ENCODE measurements at regions of chr12 and their contacts with region 1.

Region 1: DNA sequence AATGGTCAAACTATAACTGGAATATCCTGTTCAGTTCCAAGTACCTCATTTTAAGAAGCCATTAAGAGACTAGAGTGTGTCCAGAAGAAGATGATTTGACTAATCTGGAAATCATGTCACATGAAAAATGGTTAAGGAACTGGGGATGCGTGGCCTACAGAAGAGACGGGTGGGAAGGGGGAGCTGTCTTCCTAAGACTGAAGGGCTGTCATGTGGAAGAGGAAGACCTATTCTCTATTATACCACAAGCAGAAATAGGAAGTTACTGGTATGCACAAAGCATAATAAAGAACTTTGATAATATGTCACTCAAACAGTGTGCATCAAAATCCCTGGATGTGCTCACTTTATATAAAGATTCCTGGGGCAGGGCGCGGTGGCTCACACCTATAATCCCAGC is 50.3 kb downstream of the HECTD4 start:
- DNase-seq: no peak
- H3K4me3 ChIP-seq: no peak overlapping the region
- H3K27ac ChIP-seq: no peak overlapping the region
- H3K4me1 ChIP-seq: peaks cover 14% of the 10 kb centered on the region
- H3K27me3 ChIP-seq: no peaks in the 10 kb centered on the region
- CTCF ChIP-seq: no peak

Region 2: GRCh38 chr12:112375105-112375504 is 43.2 kb after region 1 on chr12:
- CTCF ChIA-PET with region 1: no interaction called
- POLR2A ChIA-PET with region 1: no interaction called
- intact Hi-C with region 1: loop called (anchors 5 kb)
- DNase-seq: no peak
- H3K4me3 ChIP-seq: no peak overlapping the region
- H3K27ac ChIP-seq: no peak overlapping the region
- H3K4me1 ChIP-seq: no peaks in the 10 kb centered on the region
- H3K27me3 ChIP-seq: no peaks in the 10 kb centered on the region
- CTCF ChIP-seq: no peak

Region 3: GRCh38 chr12:112555621-112556233 is 223.8 kb after region 1 on chr12:
- CTCF ChIA-PET with region 1: no interaction called
- POLR2A ChIA-PET with region 1: no interaction called
- intact Hi-C with region 1: no loop called
- DNase-seq: no peak
- H3K4me3 ChIP-seq: no peak overlapping the region
- H3K27ac ChIP-seq: no peak overlapping the region
- H3K4me1 ChIP-seq: no peaks in the 10 kb centered on the region
- H3K27me3 ChIP-seq: no peaks in the 10 kb centered on the region
- CTCF ChIP-seq: no peak